Activated naive CD4-positive, alpha-beta T cell treated with anti-CD3 and anti-CD28 coated beads, Interleukin-2, amount 10 ng/mL, durations not matched to agents 7 days and 5 days (primary cell): ENCODE measurements at regions of chr15 and their contacts with region 1.

Region 1: DNA sequence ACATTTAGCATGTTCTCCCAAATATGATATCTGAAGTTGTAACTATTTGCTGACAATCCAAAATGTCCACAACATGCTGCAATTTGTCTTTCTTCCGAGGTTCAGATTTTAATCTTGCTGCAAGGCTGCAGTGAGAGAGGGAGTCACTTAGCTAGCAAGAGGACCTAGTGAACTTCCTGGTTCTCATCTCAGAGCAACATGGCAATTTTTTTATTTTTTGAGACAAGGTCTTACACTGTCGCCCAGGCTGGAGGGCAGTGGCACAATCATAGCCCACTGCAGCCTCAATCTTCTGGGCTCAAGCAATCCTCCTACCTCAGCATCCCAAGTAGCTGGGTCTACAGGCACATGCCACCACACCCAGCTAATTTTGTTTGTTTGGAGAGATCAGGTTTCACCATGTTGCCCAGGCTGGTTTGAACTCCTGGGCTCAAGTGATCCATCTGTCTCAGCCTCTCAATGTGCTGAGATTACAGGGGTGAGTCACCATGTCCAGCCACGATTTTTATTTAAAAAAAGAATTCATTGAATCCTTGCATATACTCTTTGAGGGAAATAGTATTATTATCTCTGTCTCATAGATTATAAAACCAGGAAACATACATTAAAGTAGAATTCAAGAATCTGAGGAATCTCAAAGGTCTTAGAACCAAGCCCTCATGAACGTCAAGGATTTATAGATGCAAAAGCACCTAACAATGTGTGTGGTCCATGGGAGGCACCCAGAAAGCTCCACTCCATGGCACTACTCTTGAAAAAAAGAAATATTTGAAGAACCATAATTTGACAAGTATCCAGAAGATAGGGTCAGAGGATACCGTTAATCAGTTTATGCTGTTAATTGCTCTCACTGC is 9.1 kb downstream of the HDC start:
- DNase-seq: no peak
- H3K4me3 Mint-ChIP-seq: no peak overlapping the region
- H3K27ac Mint-ChIP-seq: no peak overlapping the region
- H3K4me1 Mint-ChIP-seq: peaks cover 23% of the 10 kb centered on the region
- H3K27me3 Mint-ChIP-seq: peaks cover 5% of the 10 kb centered on the region

Region 2: GRCh38 chr15:50182219-50183013 is 74.0 kb before region 1 on chr15:
- CTCF ChIA-PET with region 1: interaction called, 23 read pairs
- DNase-seq: peak; percentile 72
- H3K4me3 Mint-ChIP-seq: peak overlapping the region; percentile 92
- H3K27ac Mint-ChIP-seq: peak overlapping the region; percentile 83
- H3K4me1 Mint-ChIP-seq: peaks cover 26% of the 10 kb centered on the region
- H3K27me3 Mint-ChIP-seq: peaks cover 20% of the 10 kb centered on the region

Region 3: DNA sequence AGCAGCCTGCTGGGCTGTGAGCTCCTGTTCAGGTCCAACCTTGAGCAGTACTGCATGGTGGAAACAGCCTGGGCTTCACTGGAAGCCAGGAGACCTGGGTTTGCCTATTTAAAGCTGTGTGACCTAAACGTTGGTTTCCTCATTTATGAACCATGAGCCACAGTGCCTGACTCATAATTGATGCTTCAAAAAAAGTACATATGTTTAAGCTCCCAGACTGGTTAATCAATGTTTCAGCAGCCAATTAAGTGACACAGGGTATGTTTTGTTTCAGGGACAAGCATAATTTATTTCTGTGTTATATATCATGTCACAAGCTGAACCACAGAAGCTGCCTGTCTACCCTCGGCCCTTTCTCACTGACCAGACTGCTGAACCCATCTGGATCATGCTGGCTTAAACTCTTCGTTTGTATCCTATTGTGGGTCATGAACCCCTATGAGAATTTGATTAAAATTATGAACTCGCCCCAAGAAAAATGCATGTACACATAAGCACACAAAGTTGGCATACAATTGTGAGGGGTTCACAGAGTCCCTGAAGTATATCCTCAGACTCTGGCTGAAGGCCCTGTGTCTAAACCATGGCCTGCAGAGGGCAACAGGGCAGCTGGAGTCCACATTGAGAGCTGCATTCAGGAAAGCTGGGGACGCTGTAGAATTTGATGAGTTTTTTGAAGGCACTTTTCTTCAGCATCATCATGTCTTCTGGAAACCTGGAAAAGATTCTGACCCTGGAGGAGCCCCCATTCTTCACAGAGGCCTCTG is 14.5 kb before region 1 on chr15:
- CTCF ChIA-PET with region 1: interaction called, 41 read pairs
- DNase-seq: no peak
- H3K4me3 Mint-ChIP-seq: no peak overlapping the region
- H3K27ac Mint-ChIP-seq: no peak overlapping the region
- H3K4me1 Mint-ChIP-seq: peaks cover 6% of the 10 kb centered on the region
- H3K27me3 Mint-ChIP-seq: no peaks in the 10 kb centered on the region

Region 4: GRCh38 chr15:50302581-50302980 is 46.2 kb after region 1 on chr15:
- CTCF ChIA-PET with region 1: no interaction called
- DNase-seq: no peak
- H3K4me3 Mint-ChIP-seq: no peak overlapping the region
- H3K27ac Mint-ChIP-seq: no peak overlapping the region
- H3K4me1 Mint-ChIP-seq: no peaks in the 10 kb centered on the region
- H3K27me3 Mint-ChIP-seq: no peaks in the 10 kb centered on the region

Region 5: GRCh38 chr15:50414624-50415023 is 158.2 kb after region 1 on chr15:
- CTCF ChIA-PET with region 1: no interaction called
- DNase-seq: no peak
- H3K4me3 Mint-ChIP-seq: no peak overlapping the region
- H3K27ac Mint-ChIP-seq: no peak overlapping the region
- H3K4me1 Mint-ChIP-seq: no peaks in the 10 kb centered on the region
- H3K27me3 Mint-ChIP-seq: peaks cover 8% of the 10 kb centered on the region